Activated CD4-positive, alpha-beta T cell treated with anti-CD3 and anti-CD28 coated beads for 36 hours (primary cell): ENCODE measurements at regions of chr15 and their contacts with region 1.

Region 1: GRCh38 chr15:60585743-60586708 is 107.1 kb upstream of the ICE2 start:
- DNase-seq: peak; percentile 68
- ATAC-seq: no peak
- H3K4me3 Mint-ChIP-seq: peak overlapping the region; percentile 30
- H3K27ac Mint-ChIP-seq: peak overlapping the region; percentile 87
- H3K4me1 Mint-ChIP-seq: peaks cover 85% of the 10 kb centered on the region
- H3K27me3 Mint-ChIP-seq: no peaks in the 10 kb centered on the region

Region 2: DNA sequence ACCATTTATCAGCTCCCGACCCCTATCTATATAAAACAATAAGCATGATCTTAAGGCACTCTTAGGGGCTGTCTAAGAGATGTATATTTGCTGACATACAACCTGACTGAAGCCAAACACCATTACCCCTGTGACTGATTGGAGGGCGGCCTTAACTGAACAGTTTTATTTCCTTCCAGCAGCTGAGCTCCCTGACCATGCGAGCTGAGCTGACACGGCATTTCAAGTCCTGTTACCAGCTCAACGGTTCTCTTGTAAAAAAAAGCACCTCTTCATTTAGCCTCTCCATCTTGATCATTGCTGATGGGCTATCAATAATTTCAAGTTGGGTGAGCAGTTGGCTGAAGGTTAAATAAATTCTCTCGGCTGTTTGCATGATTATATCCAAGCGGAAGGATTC is 863.5 kb before region 1 on chr15:
- CTCF ChIA-PET with region 1: no interaction called
- POLR2A ChIA-PET with region 1: no interaction called
- intact Hi-C with region 1: no loop called
- DNase-seq: no peak
- ATAC-seq: no peak
- H3K4me3 Mint-ChIP-seq: no peak overlapping the region
- H3K27ac Mint-ChIP-seq: no peak overlapping the region
- H3K4me1 Mint-ChIP-seq: no peaks in the 10 kb centered on the region
- H3K27me3 Mint-ChIP-seq: no peaks in the 10 kb centered on the region

Region 3: GRCh38 chr15:60390231-60390630 is 195.8 kb before region 1 on chr15:
- CTCF ChIA-PET with region 1: no interaction called
- POLR2A ChIA-PET with region 1: no interaction called
- intact Hi-C with region 1: no loop called
- DNase-seq: no peak
- ATAC-seq: no peak
- H3K4me3 Mint-ChIP-seq: no peak overlapping the region
- H3K27ac Mint-ChIP-seq: no peak overlapping the region
- H3K4me1 Mint-ChIP-seq: peaks cover 56% of the 10 kb centered on the region
- H3K27me3 Mint-ChIP-seq: no peaks in the 10 kb centered on the region

Region 4: GRCh38 chr15:60478566-60479360 is 107.3 kb before region 1 on chr15 and contains the start of gene ICE2:
- CTCF ChIA-PET with region 1: interaction called, 8 read pairs
- POLR2A ChIA-PET with region 1: interaction called, 4 read pairs
- intact Hi-C with region 1: loop called in 1 of 2 experiments (anchors 2 kb)
- DNase-seq: peak; percentile 98
- ATAC-seq: peak; percentile 93
- H3K4me3 Mint-ChIP-seq: peak within 1 kb of the TSS; percentile 91
- H3K27ac Mint-ChIP-seq: peak within 1 kb of the TSS; percentile 98
- H3K4me1 Mint-ChIP-seq: peaks cover 55% of the 10 kb centered on the region
- H3K27me3 Mint-ChIP-seq: no peaks in the 10 kb centered on the region
- total RNA-seq, gene ICE2: 72.8 to 81.6 TPM

Region 5: DNA sequence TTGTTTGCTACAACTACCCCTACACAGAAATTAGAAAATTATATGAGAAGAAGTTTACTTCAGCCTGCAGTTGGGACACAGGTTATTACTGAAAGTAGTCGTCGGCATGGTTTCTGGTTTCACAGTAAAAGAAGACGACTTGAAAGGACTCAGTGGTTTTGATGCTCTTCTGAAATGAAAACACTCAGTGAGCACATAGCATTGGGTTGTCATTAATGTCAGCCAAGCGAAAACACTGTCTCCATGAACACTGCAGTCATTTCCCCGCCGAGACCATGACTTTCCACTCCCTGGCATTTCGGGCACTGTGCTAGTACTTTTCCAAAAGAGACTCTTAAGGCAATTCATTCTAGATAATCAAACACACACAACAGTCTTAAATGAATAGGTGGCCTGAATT is 37.9 kb before region 1 on chr15:
- CTCF ChIA-PET with region 1: interaction called, 25 read pairs
- POLR2A ChIA-PET with region 1: interaction called, 4 read pairs
- intact Hi-C with region 1: loop called in 1 of 2 experiments (anchors 1 kb)
- DNase-seq: peak; percentile 84
- ATAC-seq: peak; percentile 83
- H3K4me3 Mint-ChIP-seq: peak overlapping the region; percentile 61
- H3K27ac Mint-ChIP-seq: peak overlapping the region; percentile 96
- H3K4me1 Mint-ChIP-seq: peaks cover 97% of the 10 kb centered on the region
- H3K27me3 Mint-ChIP-seq: no peaks in the 10 kb centered on the region

Region 6: DNA sequence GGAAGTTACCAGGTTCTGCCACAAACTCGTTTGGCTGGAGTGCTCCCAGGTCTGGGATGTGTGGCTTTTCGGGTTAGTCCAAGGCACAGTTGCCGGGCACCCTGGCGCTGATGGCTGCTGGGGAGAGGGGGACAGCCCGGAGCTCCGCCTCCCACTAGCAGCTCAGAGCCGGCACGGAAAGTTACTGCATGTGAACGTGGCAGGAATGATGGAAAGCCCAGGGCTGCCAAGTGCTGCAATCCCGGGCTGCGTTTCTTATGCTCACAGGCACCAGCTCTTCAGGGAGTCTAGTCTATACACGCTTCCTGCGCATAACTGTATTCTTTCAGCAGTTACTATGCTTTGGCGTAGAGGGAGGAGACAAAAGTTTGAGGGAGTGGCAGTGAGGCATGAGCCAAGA is 34.7 kb after region 1 on chr15:
- CTCF ChIA-PET with region 1: no interaction called
- POLR2A ChIA-PET with region 1: no interaction called
- intact Hi-C with region 1: no loop called
- DNase-seq: no peak
- ATAC-seq: no peak
- H3K4me3 Mint-ChIP-seq: no peak overlapping the region
- H3K27ac Mint-ChIP-seq: no peak overlapping the region
- H3K4me1 Mint-ChIP-seq: no peaks in the 10 kb centered on the region
- H3K27me3 Mint-ChIP-seq: no peaks in the 10 kb centered on the region

Region 7: DNA sequence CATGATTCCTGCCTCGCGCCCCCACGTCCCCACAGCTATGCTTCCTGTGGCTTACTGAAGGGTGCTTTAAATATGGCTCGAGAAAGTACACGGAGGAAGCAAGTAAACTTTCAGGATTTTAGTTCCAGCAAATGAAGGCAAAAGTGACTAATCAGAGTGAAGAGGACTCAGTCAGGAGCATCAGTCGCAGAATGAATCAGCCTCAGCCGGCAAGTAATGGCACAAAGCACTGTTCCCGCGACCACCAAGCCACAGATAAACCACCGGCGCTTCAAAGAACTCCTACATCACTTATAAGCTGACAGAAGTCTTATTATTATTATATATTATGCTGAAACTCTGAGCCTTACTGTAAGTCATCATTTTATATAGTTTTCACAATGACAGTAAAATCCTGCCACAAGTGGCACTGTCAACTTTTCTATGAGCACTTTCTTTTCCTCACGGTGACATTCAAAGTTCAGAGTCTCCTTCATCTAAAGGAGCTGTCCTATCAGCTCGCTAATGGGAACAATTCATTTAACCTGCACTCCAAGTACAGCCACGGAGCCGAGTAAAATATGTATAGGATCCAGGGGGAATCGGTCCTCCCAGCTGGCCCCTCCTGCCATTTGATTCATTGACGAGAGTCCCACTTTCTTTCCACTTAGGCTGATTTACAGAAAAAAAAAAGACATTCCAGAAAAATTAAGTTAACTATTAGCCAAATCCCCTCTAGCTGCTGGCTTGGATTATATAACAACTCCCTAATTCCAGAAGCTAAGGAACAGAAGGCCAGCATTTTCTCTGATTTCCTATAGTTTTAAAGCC is 109.9 kb after region 1 on chr15:
- CTCF ChIA-PET with region 1: interaction called, 5 read pairs
- POLR2A ChIA-PET with region 1: interaction called, 3 read pairs
- intact Hi-C with region 1: loop called (anchors 2 to 5 kb)
- DNase-seq: peak; percentile 93
- ATAC-seq: peak; percentile 84
- H3K4me3 Mint-ChIP-seq: peak overlapping the region; percentile 58
- H3K27ac Mint-ChIP-seq: peak overlapping the region; percentile 81
- H3K4me1 Mint-ChIP-seq: peaks cover 74% of the 10 kb centered on the region
- H3K27me3 Mint-ChIP-seq: no peaks in the 10 kb centered on the region

Region 8: GRCh38 chr15:60840306-60840702 is 254.3 kb after region 1 on chr15:
- CTCF ChIA-PET with region 1: interaction called, 9 read pairs
- POLR2A ChIA-PET with region 1: interaction called, 6 read pairs
- intact Hi-C with region 1: loop called (anchors 2 kb)
- DNase-seq: peak; percentile 34
- ATAC-seq: peak; percentile 5
- H3K4me3 Mint-ChIP-seq: peak overlapping the region; percentile 60
- H3K27ac Mint-ChIP-seq: peak overlapping the region; percentile 62
- H3K4me1 Mint-ChIP-seq: peaks cover 77% of the 10 kb centered on the region
- H3K27me3 Mint-ChIP-seq: peaks cover 2% of the 10 kb centered on the region

Region 9: DNA sequence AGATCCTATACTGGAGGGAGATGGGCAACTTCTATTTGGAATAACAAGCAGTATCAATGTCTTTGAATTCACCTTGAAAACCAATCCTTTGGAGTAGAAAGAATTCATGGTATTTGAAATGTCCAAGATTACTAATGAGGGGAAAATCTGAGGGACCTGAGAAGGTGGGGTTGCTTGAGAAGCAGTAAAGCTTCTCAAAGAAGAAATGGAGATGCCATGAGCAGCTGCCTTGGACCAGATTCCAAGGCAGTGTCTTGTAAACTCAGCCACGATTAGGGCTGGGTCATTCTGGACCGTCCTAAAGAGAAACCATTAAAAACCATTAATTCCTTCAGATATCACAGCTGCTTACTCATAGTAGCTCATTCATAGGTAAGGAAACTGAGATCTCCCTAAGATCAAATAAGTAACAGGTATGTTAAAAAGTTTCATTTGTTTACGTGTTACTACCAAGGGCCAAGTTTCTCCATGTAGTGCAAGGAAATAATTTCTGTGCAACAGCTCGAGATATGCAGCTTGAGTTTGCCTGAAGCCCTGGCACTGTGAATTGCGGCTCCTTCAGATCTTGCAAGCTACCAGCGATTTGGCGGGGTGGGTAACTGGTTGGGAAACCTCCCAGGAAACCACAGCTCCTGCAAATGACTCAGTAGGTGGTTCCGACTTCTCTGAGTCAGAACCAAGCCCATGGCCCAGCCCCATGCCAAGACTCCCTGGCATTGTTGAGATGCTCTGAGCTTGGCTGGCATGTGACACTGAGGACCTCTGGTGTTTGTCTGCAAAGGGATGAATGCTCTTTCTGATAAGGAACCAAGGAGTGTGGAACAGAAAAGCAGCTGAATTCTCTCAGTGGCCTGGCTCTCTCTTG is 346.3 kb after region 1 on chr15:
- CTCF ChIA-PET with region 1: interaction called, 40 read pairs
- POLR2A ChIA-PET with region 1: no interaction called
- intact Hi-C with region 1: loop called (anchors 1 to 5 kb)
- DNase-seq: peak; percentile 79
- ATAC-seq: peak; percentile 95
- H3K4me3 Mint-ChIP-seq: no peak overlapping the region
- H3K27ac Mint-ChIP-seq: no peak overlapping the region
- H3K4me1 Mint-ChIP-seq: peaks cover 11% of the 10 kb centered on the region
- H3K27me3 Mint-ChIP-seq: peaks cover 6% of the 10 kb centered on the region